ENCODE measurements at regions of chr4 and their contacts with region 1.

Region 1: GRCh38 chr4:1167247-1167949 is 5.0 kb downstream of the SPON2 start:
- DNase-seq: peak; percentile 97
- ATAC-seq: peak; percentile 93
- H3K4me3 Mint-ChIP-seq: peak overlapping the region; percentile 80
- H3K27ac Mint-ChIP-seq: peak overlapping the region; percentile 89
- H3K4me1 Mint-ChIP-seq: peaks cover 21% of the 10 kb centered on the region
- H3K27me3 Mint-ChIP-seq: peaks cover 18% of the 10 kb centered on the region

Region 2: DNA sequence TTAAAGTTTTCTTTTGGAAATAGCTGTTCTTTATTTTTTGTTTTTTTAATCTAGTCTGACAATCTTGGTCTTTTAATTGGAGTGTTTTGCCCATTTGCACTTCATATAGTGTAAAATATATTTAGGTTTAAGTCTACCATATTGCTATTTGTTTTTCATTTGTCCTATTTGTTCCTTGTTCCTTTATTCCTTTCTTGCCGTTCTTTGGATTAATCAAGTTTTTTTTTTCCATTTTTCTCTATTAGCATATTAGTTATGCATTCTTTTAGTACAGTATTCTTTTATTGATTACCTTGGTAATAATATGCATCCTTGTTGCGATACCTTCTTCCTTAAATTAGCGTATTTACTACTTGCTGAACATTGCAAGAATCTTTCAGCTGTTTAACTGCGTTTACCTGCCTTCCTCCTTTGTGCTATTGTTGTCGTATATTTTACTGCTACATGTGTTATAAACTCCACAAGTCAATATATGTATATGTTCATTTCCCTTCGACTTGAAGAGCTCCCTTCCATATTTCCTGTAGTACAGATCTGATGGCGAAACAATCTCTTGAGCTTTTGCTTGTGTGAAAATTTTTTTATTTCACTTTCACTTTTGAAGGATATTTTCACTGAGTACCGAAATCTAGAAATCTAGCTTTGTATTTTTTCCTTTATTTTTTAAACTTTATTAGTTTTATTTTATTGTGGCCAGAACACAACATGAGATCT is 30.2 kb before region 1 on chr4:
- CTCF ChIA-PET with region 1: interaction called, 19 read pairs
- DNase-seq: no peak
- ATAC-seq: peak; percentile 36
- H3K4me3 Mint-ChIP-seq: peak overlapping the region; percentile 70
- H3K27ac Mint-ChIP-seq: peak overlapping the region; percentile 72
- H3K4me1 Mint-ChIP-seq: peaks cover 16% of the 10 kb centered on the region
- H3K27me3 Mint-ChIP-seq: peaks cover 24% of the 10 kb centered on the region

Region 3: DNA sequence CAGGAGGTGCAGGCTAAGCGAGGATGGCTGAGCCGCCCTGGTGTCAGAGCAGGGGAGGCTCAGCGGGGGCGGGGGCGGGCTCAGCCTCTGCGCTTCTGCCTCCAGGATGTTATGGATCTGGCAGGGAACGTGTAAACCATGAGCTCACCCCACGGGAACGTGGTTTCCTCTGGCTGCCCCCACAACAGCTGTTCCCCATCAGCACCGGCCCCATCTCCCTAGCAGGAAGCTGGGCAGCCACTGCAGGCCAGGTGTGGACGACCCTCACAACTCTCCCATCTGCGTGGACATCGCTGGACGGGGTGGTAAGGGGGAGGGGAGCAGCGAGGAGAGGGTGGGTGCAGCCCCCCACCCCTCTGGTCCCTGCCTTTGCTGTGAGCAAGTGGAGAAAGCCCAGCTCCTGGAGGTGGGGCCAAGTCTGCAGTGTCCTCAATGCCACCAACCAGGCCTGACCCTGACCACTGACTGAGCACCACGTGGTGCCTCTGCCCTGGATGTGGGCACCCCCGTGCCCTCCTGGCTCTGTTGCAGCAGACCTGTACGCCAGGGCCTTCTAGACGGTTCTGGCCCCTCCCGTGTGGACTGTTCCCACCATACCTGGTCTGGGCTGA is 33.1 kb after region 1 on chr4:
- CTCF ChIA-PET with region 1: interaction called, 60 read pairs
- DNase-seq: peak; percentile 71
- ATAC-seq: peak; percentile 3
- H3K4me3 Mint-ChIP-seq: peak overlapping the region; percentile 63
- H3K27ac Mint-ChIP-seq: peak overlapping the region; percentile 100
- H3K4me1 Mint-ChIP-seq: peaks cover 51% of the 10 kb centered on the region
- H3K27me3 Mint-ChIP-seq: no peaks in the 10 kb centered on the region

Region 4: DNA sequence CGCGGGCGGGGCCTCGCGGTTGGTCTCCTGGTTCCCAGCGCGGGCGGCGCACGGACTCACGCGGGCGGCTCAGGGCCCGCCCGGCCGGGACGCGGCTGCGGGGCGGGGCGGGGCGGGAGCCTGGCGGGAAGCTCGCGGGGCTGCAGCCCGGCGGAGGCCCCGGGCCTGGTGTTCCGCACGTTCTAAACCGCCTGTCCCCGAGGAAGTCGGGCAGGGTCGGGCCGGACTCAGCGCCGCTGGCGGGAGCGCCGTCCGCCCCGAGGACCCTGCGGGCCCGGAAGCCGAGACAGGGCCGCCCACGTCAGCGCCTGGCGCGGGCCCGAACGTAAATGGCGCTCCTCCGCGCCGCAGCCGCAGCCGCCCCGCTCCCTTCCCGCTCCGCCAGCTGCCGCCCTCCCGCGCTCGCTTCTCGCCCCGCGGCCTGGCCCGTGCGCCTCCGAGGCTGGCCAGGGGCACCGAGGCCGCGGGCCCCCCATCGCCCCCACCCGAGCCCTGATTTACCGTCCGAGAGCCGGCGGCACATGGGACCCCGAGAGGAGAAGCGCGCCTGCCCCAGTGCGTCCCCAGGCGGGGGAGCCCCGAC is 81.8 kb after region 1 on chr4:
- CTCF ChIA-PET with region 1: interaction called, 12 read pairs
- DNase-seq: peak; percentile 83
- ATAC-seq: peak; percentile 66
- H3K4me3 Mint-ChIP-seq: peak overlapping the region; percentile 78
- H3K27ac Mint-ChIP-seq: peak overlapping the region; percentile 95
- H3K4me1 Mint-ChIP-seq: peaks cover 68% of the 10 kb centered on the region
- H3K27me3 Mint-ChIP-seq: no peaks in the 10 kb centered on the region

Region 5: DNA sequence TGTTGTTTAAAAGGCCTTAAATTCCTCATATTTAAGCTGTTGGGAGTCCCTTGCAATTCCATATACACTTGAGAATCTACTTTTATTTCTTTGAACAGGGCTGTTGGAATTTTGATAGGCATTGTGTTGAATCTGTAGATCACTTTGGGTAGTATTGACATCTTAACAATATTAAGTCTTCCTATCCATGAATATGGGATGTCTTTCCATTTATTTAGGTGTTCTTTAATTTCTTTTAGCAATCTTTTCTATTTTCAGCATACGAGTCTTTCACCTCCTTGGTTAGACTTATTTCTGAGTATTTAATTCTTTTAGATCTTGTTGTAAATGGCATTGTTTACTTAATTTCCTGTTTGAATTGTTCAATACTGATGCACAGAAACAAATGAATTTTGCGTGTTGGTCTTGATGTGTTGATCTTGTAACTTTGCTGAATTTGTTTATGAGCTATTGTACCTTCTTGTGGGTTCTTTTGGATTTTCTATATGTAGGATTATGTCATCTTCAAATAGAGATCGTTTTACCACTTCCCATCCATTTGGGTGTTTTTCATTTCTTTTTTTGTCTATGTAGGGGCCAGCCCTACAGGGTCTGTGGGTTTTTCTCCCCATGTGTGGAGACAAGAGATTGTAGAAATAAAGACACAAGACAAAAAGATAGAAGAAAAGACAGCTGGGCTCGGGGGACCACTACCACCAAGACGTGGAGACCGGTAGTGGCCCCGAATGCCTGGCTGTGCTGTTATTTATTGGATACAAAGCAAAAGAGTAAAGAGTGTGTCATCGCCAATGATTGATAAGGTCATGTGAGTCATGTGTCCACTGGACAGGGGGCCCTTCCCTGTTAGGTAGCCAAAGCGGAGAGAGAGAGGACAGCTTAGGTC is 99.7 kb after region 1 on chr4:
- CTCF ChIA-PET with region 1: interaction called, 38 read pairs
- DNase-seq: no peak
- ATAC-seq: peak; percentile 86
- H3K4me3 Mint-ChIP-seq: peak overlapping the region; percentile 74
- H3K27ac Mint-ChIP-seq: peak overlapping the region; percentile 97
- H3K4me1 Mint-ChIP-seq: peaks cover 21% of the 10 kb centered on the region
- H3K27me3 Mint-ChIP-seq: no peaks in the 10 kb centered on the region